Colonic mucosa (tissue), 4 donors: ENCODE measurements at regions of chr6 and their contacts with region 1.

Region 1: GRCh38 chr6:150079604-150080003 is 10.7 kb upstream of the ULBP3 start:
- DNase-seq: no peak
- H3K4me3 ChIP-seq: no peak overlapping the region
- H3K27ac ChIP-seq: no peak overlapping the region
- H3K4me1 ChIP-seq: no peaks in the 10 kb centered on the region
- H3K27me3 ChIP-seq: no peaks in the 10 kb centered on the region
- CTCF ChIP-seq: no peak

Region 2: GRCh38 chr6:150334790-150335783 is 255.5 kb after region 1 on chr6:
- intact Hi-C with region 1: loop called (anchors 2 kb)
- DNase-seq: peak; percentile 64
- H3K4me3 ChIP-seq: no peak overlapping the region
- H3K27ac ChIP-seq: no peak overlapping the region
- H3K4me1 ChIP-seq: no peaks in the 10 kb centered on the region
- H3K27me3 ChIP-seq: no peaks in the 10 kb centered on the region
- CTCF ChIP-seq: peak; percentile 81